ENCODE measurements at regions of chr10 and their contacts with region 1.

Region 1: GRCh38 chr10:27661514-27662286 is 83.9 kb downstream of the MKX start:
- DNase-seq: no peak
- ATAC-seq: peak; percentile 64

Region 2: GRCh38 chr10:27446091-27446918 is 215.4 kb before region 1 on chr10:
- intact Hi-C with region 1: loop called in 1 of 2 experiments (anchors 10 kb)
- DNase-seq: no peak
- ATAC-seq: no peak

Region 3: DNA sequence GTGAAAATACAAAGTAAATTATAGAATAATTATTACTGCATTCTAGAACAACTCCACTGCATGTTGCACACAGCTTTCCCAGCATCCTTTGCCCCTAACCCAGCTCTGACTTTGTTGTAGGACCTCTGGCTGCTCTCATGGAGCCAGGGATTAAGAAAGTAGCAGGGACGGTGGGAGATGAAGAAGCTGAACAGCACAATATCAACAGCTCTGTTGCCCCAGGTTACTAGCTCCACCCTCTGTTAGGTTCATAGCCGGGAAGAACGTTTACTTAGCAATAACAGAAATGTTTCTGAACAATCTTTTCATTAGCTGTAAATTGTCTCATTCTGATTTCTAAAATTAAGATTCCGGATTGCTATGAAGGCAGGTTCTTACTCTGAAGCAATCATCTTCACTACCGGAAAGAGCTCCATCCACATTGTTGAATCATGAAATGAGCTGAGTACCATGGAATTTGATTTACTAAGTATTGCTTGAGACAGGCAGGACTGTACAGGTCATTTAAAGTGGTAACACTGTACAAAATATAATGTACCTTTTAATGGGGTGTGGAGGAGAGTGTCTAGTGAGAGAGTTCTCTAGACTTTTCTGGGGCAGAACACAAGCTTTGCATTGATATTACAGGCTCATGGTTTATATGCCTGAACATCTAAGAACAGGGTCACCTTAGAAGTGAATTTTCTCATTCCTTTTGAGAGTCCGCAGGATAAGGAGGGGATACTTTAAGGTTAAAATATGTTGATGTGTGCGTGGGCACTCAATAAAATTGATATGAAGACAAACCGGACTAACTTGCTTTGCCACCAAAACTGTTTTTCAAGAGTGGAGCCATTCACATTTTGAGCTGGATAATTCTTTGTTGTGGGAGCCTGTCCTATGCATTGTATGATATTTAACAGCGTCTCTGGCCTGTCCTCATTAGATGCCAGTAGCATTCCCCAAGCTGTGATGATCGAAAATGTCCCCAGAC is 178.4 kb before region 1 on chr10:
- intact Hi-C with region 1: no loop called
- DNase-seq: no peak
- ATAC-seq: no peak

Region 4: DNA sequence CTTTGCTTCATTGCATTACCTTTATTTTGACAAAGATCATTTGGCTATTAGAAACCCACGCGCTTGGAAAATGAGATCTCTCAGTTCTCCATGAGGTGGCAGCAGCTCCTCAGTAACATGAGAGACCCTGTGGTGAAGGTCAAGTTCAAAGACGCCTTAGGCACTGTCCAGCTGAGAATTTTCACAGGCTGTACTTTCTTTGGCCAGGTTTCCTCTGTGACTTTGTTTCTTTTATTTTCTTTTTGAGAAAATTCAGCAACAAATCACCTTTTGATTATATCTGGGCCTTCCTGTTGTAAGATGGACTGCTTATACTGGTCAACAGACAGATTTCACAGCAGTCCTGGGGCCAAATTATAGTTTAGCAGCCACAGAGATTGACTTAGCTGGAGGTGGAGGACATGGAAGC is 103.1 kb before region 1 on chr10:
- intact Hi-C with region 1: loop called in 1 of 2 experiments (anchors 10 kb)
- DNase-seq: peak; percentile 39 to 40
- ATAC-seq: peak; percentile 96

Measured in left colon (tissue), 2 donors.